PC-3 (cell line): ENCODE measurements at regions of chr5 and their contacts with region 1.

Region 1: GRCh38 chr5:30401479-30402058 is 791.9 kb upstream of the CDH6 start:
- DNase-seq: peak; percentile 70
- ATAC-seq: peak; percentile 66
- H3K4me3 ChIP-seq: peak overlapping the region; percentile 37
- H3K27ac ChIP-seq: no peak overlapping the region
- H3K4me1 ChIP-seq: peaks cover 5% of the 10 kb centered on the region
- H3K27me3 ChIP-seq: no peaks in the 10 kb centered on the region
- CTCF ChIP-seq: peak; percentile 91

Region 2: GRCh38 chr5:30469691-30470090 is 68.1 kb after region 1 on chr5:
- CTCF ChIA-PET with region 1: no interaction called
- POLR2A ChIA-PET with region 1: no interaction called
- intact Hi-C with region 1: no loop called
- DNase-seq: no peak
- ATAC-seq: no peak
- H3K4me3 ChIP-seq: no peak overlapping the region
- H3K27ac ChIP-seq: no peak overlapping the region
- H3K4me1 ChIP-seq: 0 out of 2 replicates have a peak, but pooled peaks cover 4% of the 10 kb centered on the region
- H3K27me3 ChIP-seq: no peaks in the 10 kb centered on the region
- CTCF ChIP-seq: no peak

Region 3: DNA sequence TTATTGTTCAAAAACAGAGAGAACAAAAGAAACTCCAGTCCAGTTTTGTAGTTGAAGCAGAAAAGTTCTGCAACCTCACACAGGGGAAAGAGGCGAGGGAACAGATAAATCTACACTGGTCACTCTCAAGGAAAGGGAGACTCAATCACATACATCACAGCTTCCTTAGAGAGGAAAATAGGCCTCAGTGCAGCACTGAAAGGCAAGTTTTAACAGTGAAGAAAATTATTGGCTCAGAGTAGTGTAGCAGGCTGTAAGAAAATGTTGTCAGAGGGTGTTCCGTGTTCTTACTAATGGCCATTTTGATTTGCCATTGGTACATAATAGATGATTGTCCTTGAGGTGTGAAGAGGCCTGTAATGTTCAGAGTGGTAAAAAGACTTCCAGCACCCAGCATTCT is 262.0 kb after region 1 on chr5:
- CTCF ChIA-PET with region 1: no interaction called
- POLR2A ChIA-PET with region 1: no interaction called
- intact Hi-C with region 1: no loop called
- DNase-seq: no peak
- ATAC-seq: no peak
- H3K4me3 ChIP-seq: no peak overlapping the region
- H3K27ac ChIP-seq: no peak overlapping the region
- H3K4me1 ChIP-seq: no peaks in the 10 kb centered on the region
- H3K27me3 ChIP-seq: 0 out of 2 replicates have a peak, but pooled peaks cover 3% of the 10 kb centered on the region
- CTCF ChIP-seq: no peak

Region 4: DNA sequence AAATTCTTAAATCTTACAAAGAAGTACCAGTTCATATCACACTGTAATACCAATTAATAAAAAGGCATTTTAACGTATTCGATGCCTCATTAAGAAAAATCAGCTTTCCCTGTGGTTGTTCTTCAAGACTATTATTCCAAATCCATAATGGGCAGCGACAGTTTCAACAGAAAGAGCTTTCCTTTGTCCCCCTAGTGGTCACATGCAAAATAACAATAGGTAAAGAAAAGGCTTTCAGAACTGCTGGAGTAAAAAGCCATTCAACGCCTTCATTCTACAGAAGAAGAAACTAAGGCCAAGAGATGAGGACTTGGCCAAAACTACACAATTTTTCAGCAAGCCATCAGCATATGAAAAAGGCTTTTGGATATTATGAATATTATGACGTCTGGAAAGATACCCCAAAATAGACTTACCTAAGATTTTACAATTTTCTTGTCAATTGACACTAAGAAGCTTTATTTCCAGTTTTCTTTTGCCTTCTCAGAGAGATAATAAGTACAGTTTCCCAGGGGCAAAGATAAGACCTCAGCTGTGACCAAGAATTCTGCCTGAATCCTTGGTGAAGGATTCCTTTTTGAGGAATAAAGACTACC is 785.2 kb after region 1 on chr5:
- CTCF ChIA-PET with region 1: no interaction called
- POLR2A ChIA-PET with region 1: no interaction called
- intact Hi-C with region 1: loop called (anchors 5 kb)
- DNase-seq: peak; percentile 59
- ATAC-seq: no peak
- H3K4me3 ChIP-seq: no peak overlapping the region
- H3K27ac ChIP-seq: no peak overlapping the region
- H3K4me1 ChIP-seq: no peaks in the 10 kb centered on the region
- H3K27me3 ChIP-seq: peaks cover 17% of the 10 kb centered on the region
- CTCF ChIP-seq: peak; percentile 86

Region 5: GRCh38 chr5:31232273-31232888 is 830.8 kb after region 1 on chr5:
- CTCF ChIA-PET with region 1: no interaction called
- POLR2A ChIA-PET with region 1: no interaction called
- intact Hi-C with region 1: loop called (anchors 5 kb)
- DNase-seq: peak; percentile 81
- ATAC-seq: peak; percentile 95
- H3K4me3 ChIP-seq: no peak overlapping the region
- H3K27ac ChIP-seq: no peak overlapping the region
- H3K4me1 ChIP-seq: no peaks in the 10 kb centered on the region
- H3K27me3 ChIP-seq: no peaks in the 10 kb centered on the region
- CTCF ChIP-seq: peak; percentile 91